Activated CD8-positive, alpha-beta T cell treated with anti-CD3 and anti-CD28 coated beads for 36 hours (primary cell): ENCODE measurements at regions of chr12 and their contacts with region 1.

Region 1: DNA sequence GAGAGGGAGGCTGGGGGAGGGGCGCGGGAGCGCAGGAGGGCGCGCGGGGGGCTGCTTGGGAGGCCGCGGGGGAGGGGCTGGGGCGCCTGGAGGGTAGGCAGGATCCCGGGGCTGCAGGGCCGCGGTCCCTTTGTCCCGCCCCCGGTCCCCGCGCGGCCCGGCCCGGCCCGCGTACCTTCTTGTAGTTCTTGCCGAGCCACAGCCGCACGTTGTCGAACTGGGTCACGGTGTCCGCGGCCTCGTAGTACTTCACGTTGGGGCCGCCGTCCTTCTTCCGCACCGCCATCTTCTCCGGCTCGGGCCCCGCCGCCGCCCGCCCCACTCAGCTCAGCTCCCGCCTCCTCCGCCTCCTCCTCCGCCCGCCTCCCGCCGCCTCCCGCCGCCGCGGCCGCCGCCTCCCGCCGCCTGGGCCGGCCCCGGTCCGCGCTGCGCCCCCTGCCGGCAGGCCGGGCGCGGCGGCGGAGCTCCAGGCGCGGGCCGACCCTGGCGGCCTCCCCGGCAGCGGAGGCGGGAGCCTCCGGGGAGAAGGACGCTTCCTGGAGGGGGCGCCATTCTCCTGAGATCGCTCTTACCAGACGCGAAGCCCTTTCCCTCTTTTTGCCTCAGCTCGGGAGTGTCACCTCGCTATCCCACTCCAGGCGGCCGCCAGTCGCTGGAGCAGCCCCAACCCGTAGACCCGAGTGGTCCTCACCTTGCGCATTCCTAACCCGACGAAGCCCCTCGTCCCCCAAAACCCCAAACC is at the start of gene SMARCC2:
- DNase-seq: peak; percentile 91
- ATAC-seq: peak; percentile 84
- H3K4me3 Mint-ChIP-seq: peak within 1 kb of the TSS; percentile 92
- H3K27ac Mint-ChIP-seq: peak within 1 kb of the TSS; percentile 98
- H3K4me1 Mint-ChIP-seq: peaks cover 40% of the 10 kb centered on the region
- H3K27me3 Mint-ChIP-seq: peaks cover 2% of the 10 kb centered on the region
- CTCF ChIP-seq: peak; percentile 76
- total RNA-seq, gene SMARCC2: 79.3 to 87.9 TPM

Region 2: GRCh38 chr12:56087220-56087619 is 102.1 kb before region 1 on chr12:
- CTCF ChIA-PET with region 1: no interaction called
- POLR2A ChIA-PET with region 1: no interaction called
- intact Hi-C with region 1: no loop called
- DNase-seq: no peak
- ATAC-seq: no peak
- H3K4me3 Mint-ChIP-seq: no peak overlapping the region
- H3K27ac Mint-ChIP-seq: no peak overlapping the region
- H3K4me1 Mint-ChIP-seq: no peaks in the 10 kb centered on the region
- H3K27me3 Mint-ChIP-seq: no peaks in the 10 kb centered on the region
- CTCF ChIP-seq: no peak

Region 3: DNA sequence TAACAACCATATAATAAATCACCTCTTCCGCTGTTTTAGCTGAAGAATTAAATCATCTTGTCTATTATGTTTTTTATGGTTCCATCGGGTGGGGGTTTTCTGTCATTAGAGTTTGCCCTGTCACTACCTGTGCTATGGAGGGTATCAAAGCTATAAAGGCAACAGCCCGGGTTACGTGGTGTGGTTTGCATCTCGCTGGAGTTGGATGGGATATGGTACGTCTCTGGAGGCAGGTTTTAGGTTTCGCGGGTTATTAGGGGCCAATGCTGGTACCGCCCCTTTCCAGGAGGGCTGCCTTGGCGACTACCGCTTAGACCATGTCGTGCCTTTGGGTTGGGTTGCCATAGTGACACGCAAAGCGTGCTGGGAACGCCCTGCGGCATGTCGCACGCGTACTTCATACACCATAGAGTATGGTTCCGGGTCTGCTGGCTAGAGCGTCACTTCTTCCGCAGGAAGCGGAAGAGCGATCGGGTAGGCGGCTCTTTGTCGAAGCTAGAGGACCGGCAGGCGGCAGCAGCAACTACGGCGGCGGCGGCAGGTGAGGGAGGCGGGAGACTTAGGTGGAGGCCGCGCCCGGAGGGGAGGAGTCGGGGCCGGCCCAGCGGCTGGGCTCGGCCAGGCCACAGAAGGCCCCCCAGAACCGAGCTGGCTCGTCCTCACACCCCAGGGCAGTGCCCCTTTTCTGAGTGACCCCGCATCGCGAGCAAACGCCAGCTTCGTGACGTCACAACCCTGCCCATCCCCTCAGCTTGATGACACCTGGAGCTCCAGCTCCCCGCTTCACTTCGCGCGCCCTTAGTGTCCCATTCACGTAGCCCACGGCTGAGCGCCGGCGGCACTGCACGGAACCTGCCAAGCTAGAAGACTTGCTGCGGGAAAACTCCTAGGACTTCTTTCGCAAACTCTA is 71.3 kb before region 1 on chr12 and contains the start of gene ZC3H10:
- CTCF ChIA-PET with region 1: interaction called, 110 read pairs
- POLR2A ChIA-PET with region 1: interaction called, 68 read pairs
- intact Hi-C with region 1: loop called (anchors 2 kb)
- DNase-seq: peak; percentile 99
- ATAC-seq: peak; percentile 86
- H3K4me3 Mint-ChIP-seq: peak within 1 kb of the TSS; percentile 89
- H3K27ac Mint-ChIP-seq: peak within 1 kb of the TSS; percentile 100
- H3K4me1 Mint-ChIP-seq: peaks cover 23% of the 10 kb centered on the region
- H3K27me3 Mint-ChIP-seq: no peaks in the 10 kb centered on the region
- CTCF ChIP-seq: no peak
- total RNA-seq, gene ZC3H10: 6.8 to 7.2 TPM

Region 4: DNA sequence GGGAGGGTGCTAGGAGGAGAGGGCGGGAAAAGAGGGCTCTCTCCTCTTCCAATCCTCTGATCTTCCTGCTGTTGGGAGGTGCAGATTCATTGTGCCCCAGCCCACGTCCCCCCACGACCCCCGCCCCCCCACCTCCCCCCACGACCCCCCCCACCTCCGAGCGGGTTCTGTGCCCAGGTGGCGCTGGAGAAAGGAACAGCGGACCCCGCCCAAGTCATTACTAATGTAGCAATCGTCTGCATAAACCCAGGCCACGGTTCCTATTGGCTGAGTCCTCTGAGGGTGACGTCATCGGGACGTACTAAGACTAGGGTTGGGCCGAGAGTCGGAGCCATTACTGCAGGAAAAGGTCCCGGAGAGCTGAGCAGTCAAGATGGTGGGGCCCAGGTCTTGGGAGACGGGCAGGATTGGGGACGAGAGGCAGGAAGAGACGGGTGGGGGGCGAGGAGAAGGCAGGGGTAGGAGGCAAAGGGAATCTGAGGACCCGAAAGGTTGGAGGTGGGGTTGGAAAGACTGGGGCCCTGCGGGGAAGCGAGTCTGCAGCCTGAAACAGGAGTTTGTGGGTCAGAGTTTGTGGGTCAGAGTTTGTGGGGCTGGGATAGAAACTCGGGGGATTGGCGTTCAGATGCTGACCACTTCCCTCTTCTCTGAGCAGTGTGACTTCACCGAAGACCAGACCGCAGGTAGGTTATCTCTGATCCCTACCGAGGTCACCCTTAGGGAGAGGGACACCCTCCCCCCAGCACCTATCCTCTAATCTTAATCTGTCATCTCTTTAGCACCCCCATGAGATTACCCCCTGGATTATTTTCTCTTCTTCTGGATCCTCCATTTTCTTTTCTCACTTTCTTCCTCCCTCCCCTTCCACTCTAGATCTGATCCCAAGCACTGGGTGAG is 31.1 kb before region 1 on chr12 and contains the start of gene MYL6:
- CTCF ChIA-PET with region 1: interaction called, 25 read pairs
- POLR2A ChIA-PET with region 1: interaction called, 20 read pairs
- intact Hi-C with region 1: no loop called
- DNase-seq: peak; percentile 98
- ATAC-seq: peak; percentile 87
- H3K4me3 Mint-ChIP-seq: peak within 1 kb of the TSS; percentile 95
- H3K27ac Mint-ChIP-seq: peak within 1 kb of the TSS; percentile 98
- H3K4me1 Mint-ChIP-seq: peaks cover 33% of the 10 kb centered on the region
- H3K27me3 Mint-ChIP-seq: no peaks in the 10 kb centered on the region
- CTCF ChIP-seq: no peak
- total RNA-seq, gene MYL6: 647 to 663 TPM

Region 5: DNA sequence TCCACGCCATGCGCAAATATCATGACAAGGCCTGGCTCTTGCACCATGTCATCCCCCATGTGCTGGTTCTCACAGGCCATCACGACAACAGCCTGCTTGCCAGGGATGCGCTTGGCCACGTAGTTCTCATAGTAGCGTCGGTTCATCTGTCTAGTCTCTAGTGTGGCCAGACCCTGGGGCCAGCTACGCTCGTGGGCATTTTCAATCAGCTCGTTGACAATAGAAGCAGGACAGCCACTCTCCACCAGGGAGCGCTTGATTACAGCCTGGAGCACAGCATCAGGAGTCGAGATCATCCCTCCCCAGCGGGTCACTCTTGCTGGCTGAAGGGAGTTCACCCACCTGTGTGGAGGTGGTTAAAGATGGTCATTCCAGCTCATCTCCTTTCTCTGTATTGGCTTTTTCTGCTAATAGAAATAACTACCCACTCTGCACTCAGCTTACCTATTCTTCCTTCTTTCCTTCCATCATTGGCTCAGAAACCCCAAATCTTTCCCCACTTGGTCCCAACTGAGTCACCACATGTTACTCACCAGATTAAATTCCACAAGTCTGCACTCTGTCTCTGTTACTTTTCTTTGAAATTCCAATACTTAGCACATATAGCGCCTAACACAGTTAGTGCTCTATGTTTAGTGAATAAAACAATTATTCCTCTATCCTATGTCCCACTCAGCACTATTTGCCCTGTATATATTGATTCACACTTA is 17.3 kb after region 1 on chr12:
- CTCF ChIA-PET with region 1: interaction called, 87 read pairs
- POLR2A ChIA-PET with region 1: interaction called, 4 read pairs
- intact Hi-C with region 1: no loop called
- DNase-seq: peak; percentile 67
- ATAC-seq: peak; percentile 80
- H3K4me3 Mint-ChIP-seq: no peak overlapping the region
- H3K27ac Mint-ChIP-seq: no peak overlapping the region
- H3K4me1 Mint-ChIP-seq: peaks cover 4% of the 10 kb centered on the region
- H3K27me3 Mint-ChIP-seq: no peaks in the 10 kb centered on the region
- CTCF ChIP-seq: peak; percentile 36

Region 6: DNA sequence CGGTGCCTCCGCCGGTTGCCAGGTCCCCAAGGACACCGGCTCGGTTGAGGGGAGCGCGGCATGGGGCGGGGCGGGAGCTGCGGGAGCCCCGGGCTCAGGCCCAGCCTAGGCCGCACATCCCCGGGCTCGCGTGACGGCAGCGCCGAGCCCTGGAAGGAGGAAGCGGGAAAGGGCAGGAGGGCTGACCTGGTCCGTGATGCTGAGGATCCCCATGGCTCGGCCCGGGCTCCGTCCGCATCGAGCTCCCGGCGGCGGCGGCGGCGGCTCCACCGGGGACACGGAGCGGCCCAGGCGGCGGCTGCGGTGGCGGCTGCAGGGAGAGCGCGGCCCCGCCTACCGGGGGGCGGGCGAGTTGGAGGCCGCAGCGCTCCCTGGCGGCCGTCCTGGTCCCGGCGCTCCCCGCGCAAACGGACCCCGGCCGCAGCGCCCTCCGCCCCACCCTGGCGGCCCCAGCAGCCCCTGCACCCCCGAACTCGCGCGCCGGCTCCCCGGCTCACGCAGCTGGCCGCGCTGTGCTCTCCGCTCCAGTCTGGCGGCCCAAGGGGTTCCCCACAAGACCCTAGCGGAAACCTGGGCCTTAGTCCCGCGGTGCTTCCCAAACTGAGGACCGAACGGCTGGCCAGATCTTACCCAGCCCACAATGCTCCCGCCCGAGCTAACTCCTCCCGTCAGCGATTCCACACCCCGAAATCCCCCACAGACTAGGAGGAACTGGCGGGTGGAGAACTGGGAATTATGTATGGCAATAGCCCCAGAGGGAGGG is 68.9 kb after region 1 on chr12 and contains the start of gene ANKRD52:
- CTCF ChIA-PET with region 1: interaction called, 16 read pairs
- POLR2A ChIA-PET with region 1: interaction called, 6 read pairs
- intact Hi-C with region 1: loop called (anchors 5 kb)
- DNase-seq: peak; percentile 81
- ATAC-seq: peak; percentile 94
- H3K4me3 Mint-ChIP-seq: peak within 1 kb of the TSS; percentile 88
- H3K27ac Mint-ChIP-seq: peak within 1 kb of the TSS; percentile 87
- H3K4me1 Mint-ChIP-seq: peaks cover 19% of the 10 kb centered on the region
- H3K27me3 Mint-ChIP-seq: no peaks in the 10 kb centered on the region
- CTCF ChIP-seq: peak; percentile 80
- total RNA-seq, gene ANKRD52: 23.3 to 31.3 TPM

Region 7: GRCh38 chr12:56359851-56360767 is 170.8 kb after region 1 on chr12 and contains the start of gene STAT2:
- CTCF ChIA-PET with region 1: interaction called, 11 read pairs
- POLR2A ChIA-PET with region 1: no interaction called
- intact Hi-C with region 1: no loop called
- DNase-seq: peak; percentile 99
- ATAC-seq: peak; percentile 97
- H3K4me3 Mint-ChIP-seq: peak within 1 kb of the TSS; percentile 81
- H3K27ac Mint-ChIP-seq: peak within 1 kb of the TSS; percentile 95
- H3K4me1 Mint-ChIP-seq: peaks cover 20% of the 10 kb centered on the region
- H3K27me3 Mint-ChIP-seq: no peaks in the 10 kb centered on the region
- CTCF ChIP-seq: no peak
- total RNA-seq, gene STAT2: 64.4 to 69.7 TPM